Heart right ventricle (tissue), 16 donors: ENCODE measurements at regions of chr16 and their contacts with region 1.

Region 1: DNA sequence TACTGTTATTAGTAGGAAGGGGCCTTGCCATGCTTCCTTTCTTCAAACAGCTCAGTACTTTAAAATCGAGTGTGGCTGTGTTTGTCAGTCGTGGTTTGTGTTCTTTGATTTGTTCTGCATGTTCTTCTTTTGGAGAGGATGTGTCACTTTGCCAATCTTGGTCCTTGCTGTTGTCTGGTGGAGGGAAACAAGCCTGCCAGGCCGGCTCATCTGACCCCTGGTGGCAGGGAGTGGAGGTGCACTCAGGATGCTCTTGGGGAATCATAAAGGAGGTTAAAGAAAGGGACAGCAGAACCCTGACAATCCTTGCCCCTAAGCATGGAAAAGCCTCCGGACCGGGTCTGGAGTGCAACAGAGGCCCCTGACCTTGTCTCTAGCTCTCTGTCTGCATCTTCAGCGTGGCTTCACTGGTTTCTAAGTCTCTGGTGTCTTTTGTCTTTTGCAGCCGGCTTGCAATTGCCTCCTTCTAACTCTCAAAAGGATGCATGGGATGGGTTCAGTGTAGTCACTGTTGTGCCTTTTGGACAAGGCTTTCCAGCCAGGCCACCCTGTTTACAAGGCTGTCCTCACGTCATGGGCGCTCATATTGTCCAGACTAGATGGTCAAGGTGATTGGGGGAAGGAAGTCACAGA is 135.8 kb downstream of the WWOX start:
- DNase-seq: peak; percentile 64 to 71
- ATAC-seq: peak in 7 of 8 donors; percentile 53 to 79 (median 68)
- H3K4me3 ChIP-seq: no peak overlapping the region
- H3K27ac ChIP-seq: no peak overlapping the region
- H3K4me1 ChIP-seq: peaks cover 0 to 20% (median 6%) of the 10 kb centered on the region in 9 donors
- H3K27me3 ChIP-seq: no peaks in the 10 kb centered on the region
- CTCF ChIP-seq: peak; percentile 79 to 93 (median 89)

Region 2: DNA sequence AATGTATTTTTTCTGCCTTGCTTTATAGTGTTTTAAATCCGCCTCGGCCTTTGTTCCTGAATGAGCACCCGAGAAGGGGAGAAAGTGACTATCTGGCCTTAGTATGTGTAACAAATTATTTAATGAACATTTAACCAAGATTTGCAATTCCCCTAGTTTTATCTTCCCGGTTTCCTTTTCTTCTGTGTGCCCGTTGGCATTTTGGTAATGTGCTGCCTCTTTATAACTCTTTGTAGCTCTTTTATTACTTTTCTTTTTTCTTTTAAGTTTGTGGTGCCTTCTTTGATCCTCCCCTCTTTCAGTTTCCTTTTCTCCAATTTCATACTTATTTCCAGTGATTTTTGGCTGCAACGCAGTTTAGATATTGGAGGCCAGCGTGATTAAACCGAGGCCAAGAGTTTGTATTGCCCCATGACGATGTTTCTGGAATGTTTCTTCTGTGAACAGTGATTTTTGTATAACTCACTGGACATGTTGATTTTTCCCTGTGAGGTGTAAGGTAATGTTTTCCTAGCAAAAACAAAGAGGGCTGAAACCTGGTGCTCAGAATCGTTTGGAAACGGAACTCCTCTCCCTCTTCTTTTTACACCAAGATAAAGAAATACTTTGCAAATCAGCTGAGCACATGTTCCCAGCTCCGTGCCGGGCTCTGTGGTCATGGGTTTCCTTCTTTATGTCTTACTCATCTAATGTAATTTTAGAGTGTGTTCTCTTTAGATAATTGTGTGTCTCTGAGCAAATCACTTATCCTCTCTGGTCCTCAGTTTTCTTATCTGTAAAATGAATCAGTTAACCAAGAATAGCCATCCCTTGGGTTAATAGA is 208.5 kb after region 1 on chr16:
- intact Hi-C with region 1: loop called in 5 of 10 experiments (anchors 10 kb)
- DNase-seq: no peak
- ATAC-seq: peak in 3 of 8 donors; percentile 42 to 46 (median 42)
- H3K4me3 ChIP-seq: peak overlapping the region in 1 of 10 donors; percentile 14
- H3K27ac ChIP-seq: peak overlapping the region in 1 of 10 donors; percentile 26
- H3K4me1 ChIP-seq: peaks cover 0 to 11% (median 0%) of the 10 kb centered on the region in 9 donors
- H3K27me3 ChIP-seq: no peaks in the 10 kb centered on the region
- CTCF ChIP-seq: no peak

Region 3: GRCh38 chr16:80084685-80085084 is 1849.4 kb after region 1 on chr16:
- intact Hi-C with region 1: loop called in 1 of 10 experiments (anchors 10 kb)
- DNase-seq: peak; percentile 10 to 46
- ATAC-seq: peak; percentile 59 to 97 (median 90)
- H3K4me3 ChIP-seq: no peak overlapping the region
- H3K27ac ChIP-seq: no peak overlapping the region
- H3K4me1 ChIP-seq: peaks cover 0 to 4% (median 0%) of the 10 kb centered on the region in 9 donors
- H3K27me3 ChIP-seq: no peaks in the 10 kb centered on the region
- CTCF ChIP-seq: peak; percentile 37 to 74 (median 66)